ENCODE measurements at regions of chr21 and their contacts with region 1.

Region 1: DNA sequence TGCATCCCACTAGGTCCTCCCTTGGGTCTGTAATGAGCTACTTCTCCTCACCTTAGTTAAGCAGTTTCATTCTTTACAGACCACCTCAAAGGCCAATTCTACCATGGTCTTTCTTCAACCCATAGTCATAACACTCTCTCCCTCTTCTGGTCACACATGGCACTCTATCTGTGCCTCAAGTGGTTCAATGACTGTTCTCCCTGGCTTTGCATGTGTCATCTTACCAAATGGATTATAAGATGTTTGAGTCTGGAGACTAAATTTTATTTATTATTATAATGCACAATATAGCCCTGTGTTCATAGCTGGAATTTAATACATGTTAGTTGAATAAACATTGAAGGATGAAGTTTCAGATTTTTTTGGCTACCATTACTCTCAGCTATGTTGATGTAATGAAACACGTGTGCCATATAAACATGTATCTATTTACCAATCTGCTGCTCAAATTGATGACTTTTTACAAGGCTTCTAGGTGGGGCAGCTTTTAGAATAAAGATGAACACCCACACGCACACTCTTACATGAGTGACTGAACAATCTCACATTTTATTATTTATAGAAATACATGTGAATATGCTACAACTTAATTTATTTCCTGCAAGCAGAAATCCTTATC is 102.1 kb downstream of the RUNX1 start:
- DNase-seq: no peak
- ATAC-seq: peak; percentile 27
- H3K4me3 ChIP-seq: no peak overlapping the region
- H3K4me3 Mint-ChIP-seq: peak overlapping the region in 5 of 10 donors; percentile 35 to 65 (median 49)
- H3K27ac ChIP-seq: no peak overlapping the region
- H3K27ac Mint-ChIP-seq: peak overlapping the region in 6 of 9 donors; percentile 59 to 86 (median 81)
- H3K4me1 ChIP-seq: peaks cover 21 to 50% of the 10 kb centered on the region in 2 donors
- H3K4me1 Mint-ChIP-seq: peaks cover 46 to 100% (median 97%) of the 10 kb centered on the region in 7 donors
- H3K27me3 ChIP-seq: no peaks in the 10 kb centered on the region
- H3K27me3 Mint-ChIP-seq: no peaks in the 10 kb centered on the region

Region 2: DNA sequence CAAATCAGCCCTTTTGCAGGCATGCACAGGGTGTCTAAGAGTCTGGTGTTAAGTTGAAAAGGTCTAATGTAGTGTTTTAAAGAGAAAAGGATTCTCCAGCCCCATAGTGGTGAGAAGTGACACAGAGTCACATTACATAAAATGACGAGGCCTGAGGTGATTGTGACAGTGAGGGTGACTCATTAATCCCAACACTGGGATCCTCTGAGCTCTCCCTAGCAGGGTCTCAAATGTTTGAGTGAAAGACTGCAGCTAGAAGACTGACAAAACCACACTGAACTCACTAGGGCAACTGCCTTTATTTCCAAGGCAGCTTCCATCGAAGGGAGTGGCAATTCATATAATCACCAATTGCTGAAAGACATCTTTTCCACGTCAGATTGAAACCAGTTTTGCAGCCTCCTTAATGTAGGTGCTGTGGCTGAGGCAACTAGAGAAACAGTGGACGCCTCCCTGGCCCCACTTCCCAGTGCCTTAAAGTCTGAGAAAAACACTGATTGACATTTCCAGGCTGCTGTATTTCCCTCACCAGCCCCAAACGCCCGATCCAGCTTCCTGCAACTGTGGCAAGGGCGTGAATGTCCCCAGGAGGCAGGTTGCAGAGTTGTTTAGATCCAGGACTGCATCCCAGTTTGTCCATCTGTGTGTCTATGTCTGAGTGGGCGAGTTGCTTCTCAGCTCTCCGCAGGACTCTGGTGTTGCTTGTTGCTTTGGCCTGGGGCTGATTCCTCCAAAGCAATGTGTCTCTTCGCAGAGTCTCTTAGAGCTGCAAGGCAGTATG is 20.7 kb after region 1 on chr21:
- CTCF ChIA-PET with region 1: interaction called, 7 read pairs
- POLR2A ChIA-PET with region 1: interaction called, 5 read pairs
- intact Hi-C with region 1: loop called in 1 of 2 experiments (anchors 2 kb)
- DNase-seq: peak in 1 of 9 donors; percentile 30
- ATAC-seq: peak; percentile 60
- H3K4me3 ChIP-seq: no peak overlapping the region
- H3K4me3 Mint-ChIP-seq: peak overlapping the region in 9 of 10 donors; percentile 18 to 82 (median 69)
- H3K27ac ChIP-seq: no peak overlapping the region
- H3K27ac Mint-ChIP-seq: peak overlapping the region; percentile 65 to 93 (median 85)
- H3K4me1 ChIP-seq: peaks cover 31 to 75% of the 10 kb centered on the region in 2 donors
- H3K4me1 Mint-ChIP-seq: peaks cover 78 to 100% (median 96%) of the 10 kb centered on the region in 7 donors
- H3K27me3 ChIP-seq: no peaks in the 10 kb centered on the region
- H3K27me3 Mint-ChIP-seq: peaks cover 0 to 8% (median 0%) of the 10 kb centered on the region in 5 donors

Region 3: DNA sequence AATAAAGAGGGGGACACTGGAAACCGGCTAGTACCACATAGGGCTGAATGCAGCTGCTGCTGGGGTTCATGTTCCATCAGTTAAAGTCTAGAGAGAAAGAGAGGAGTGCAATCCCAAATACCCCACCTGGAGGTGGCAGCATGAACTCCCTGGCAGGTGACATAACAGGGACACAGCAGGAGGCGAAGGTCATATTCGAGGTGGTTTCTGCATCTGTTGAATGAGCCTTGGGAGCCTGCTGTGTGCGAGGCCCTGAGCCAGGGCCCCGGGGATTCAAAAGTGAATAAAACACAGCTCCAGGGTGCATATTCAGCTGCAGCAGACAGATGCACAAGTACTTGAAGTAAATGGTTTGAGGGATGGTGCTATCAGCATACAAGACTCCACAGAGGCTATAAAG is 656.5 kb after region 1 on chr21:
- CTCF ChIA-PET with region 1: no interaction called
- POLR2A ChIA-PET with region 1: no interaction called
- intact Hi-C with region 1: no loop called
- DNase-seq: no peak
- ATAC-seq: no peak
- H3K4me3 ChIP-seq: no peak overlapping the region
- H3K4me3 Mint-ChIP-seq: no peak overlapping the region
- H3K27ac ChIP-seq: no peak overlapping the region
- H3K27ac Mint-ChIP-seq: no peak overlapping the region
- H3K4me1 ChIP-seq: no peaks in the 10 kb centered on the region
- H3K4me1 Mint-ChIP-seq: peaks cover 0 to 2% (median 0%) of the 10 kb centered on the region in 7 donors
- H3K27me3 ChIP-seq: no peaks in the 10 kb centered on the region
- H3K27me3 Mint-ChIP-seq: peaks cover 0 to 8% (median 0%) of the 10 kb centered on the region in 5 donors

Measured in naive thymus-derived CD4-positive, alpha-beta T cell (primary cell).